ENCODE measurements at regions of chr13 and their contacts with region 1.

Region 1: GRCh38 chr13:26253787-26254582 is at the start of gene CDK8:
- DNase-seq: peak; percentile 89 to 93 (median 91)
- H3K4me3 ChIP-seq: peak within 1 kb of the TSS; percentile 65 to 99 (median 91)
- H3K27ac ChIP-seq: peak within 1 kb of the TSS; percentile 84 to 100 (median 97)
- H3K27me3 ChIP-seq: no peaks in the 10 kb centered on the region
- CTCF ChIP-seq: peak in 28 of 56 donors; percentile 3 to 61 (median 30)
- total RNA-seq, gene CDK8: 10.4 to 23.0 (median 14.9) TPM

Region 2: DNA sequence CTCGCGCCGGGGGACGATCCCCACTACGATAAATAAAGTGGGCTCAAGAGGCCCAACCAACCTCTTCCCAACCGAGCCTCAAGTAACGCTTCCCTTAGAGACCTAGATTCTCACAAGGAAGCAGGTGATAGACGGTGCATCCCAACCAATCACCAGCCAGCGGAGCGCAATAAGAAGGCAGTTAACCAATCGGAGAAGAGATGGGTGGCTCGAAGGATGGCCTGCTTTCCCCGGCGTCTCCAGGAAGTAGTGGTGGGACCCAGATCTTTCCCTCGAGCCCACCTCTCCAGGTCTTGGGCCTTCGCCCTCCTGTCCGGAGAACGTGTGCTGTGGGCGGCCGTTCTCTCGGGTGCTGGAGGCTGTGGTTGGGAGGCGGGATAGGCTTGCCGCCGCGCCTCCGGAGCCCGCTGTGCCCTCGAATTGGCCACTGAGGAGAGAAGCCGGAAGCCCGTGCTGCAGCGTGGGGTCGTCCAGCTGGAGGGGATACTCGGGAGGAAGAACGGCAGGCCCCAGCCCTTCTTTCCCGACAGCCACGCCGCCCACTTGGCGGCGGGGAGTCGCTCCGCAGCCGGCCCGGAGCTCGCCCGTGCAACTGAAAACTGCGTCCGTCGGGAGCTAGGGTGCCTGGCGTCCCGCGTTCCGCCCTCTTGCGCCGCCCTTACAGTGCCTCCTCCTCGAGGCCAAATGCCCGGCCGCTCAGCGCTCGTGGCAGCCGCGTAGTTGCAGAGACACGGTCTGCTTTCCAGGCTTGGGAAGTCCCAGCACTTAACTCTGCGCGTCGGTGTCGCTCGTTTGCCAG is 32.1 kb before region 1 on chr13 and contains the start of gene RNF6:
- intact Hi-C with region 1: loop called (anchors 1 to 2 kb)
- DNase-seq: peak; percentile 84 to 99 (median 95)
- H3K4me3 ChIP-seq: peak within 1 kb of the TSS; percentile 67 to 99 (median 91)
- H3K27ac ChIP-seq: peak within 1 kb of the TSS; percentile 65 to 99 (median 96)
- H3K27me3 ChIP-seq: no peaks in the 10 kb centered on the region
- CTCF ChIP-seq: peak in 45 of 56 donors; percentile 13 to 63 (median 35)
- total RNA-seq, gene RNF6: 25.4 to 76.6 (median 53.5) TPM

Region 3: DNA sequence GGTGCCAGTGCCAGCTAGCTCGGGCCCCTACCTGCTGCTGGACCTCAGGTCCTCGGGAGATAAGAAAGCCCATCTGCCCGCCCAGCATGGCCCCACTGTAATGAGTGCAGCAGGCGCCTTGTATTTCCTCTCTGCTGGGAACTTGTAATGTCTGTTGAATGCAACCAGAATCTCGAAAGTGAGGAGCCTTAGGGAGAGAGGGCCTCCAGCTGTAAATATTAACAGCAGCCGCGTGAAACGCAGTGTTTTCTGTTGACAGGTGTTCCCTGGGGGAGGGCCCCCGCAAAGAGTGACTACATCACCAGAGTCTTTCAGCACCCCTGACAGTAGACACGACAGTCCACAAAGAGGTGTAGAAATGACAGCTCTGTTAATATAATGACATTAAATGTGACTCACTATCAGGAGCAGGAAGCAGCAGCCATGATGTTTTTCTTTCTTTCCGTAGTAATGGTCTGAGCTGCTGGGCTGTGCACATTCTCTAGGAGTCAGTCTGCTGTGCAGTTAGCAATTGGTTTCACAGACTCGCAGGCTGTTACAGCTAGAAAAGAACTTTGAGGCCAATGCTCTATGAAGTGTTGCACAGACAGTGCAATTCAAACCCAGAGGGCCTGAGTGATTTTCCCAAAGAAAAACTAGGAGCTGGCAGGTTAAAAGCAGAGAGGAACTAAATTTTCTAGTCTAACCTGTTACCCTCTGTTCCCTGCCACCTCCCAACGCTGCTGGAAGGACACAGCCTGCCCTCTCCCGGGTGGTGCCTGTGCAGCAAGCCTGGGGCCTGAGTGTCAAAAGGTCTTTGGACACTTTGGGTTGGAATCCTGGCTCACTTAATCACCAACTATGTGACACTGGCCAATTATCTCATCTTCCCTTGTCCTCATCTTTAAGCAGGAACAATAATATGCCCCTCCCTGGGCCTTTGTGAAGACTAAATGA is 244.9 kb after region 1 on chr13:
- intact Hi-C with region 1: loop called in 1 of 2 experiments (anchors 10 kb)
- DNase-seq: peak in 1 of 10 donors; percentile 61
- H3K4me3 ChIP-seq: no peak overlapping the region
- H3K27ac ChIP-seq: peak overlapping the region in 1 of 59 donors; percentile 72
- H3K27me3 ChIP-seq: no peaks in the 10 kb centered on the region
- CTCF ChIP-seq: no peak

Region 4: GRCh38 chr13:26557393-26558023 is 303.5 kb after region 1 on chr13 and contains the start of gene WASF3:
- intact Hi-C with region 1: loop called (anchors 5 to 10 kb)
- DNase-seq: peak; percentile 92 to 98 (median 96)
- H3K4me3 ChIP-seq: peak within 1 kb of the TSS; percentile 66 to 98 (median 82)
- H3K27ac ChIP-seq: peak within 1 kb of the TSS in 45 of 59 donors; percentile 15 to 88 (median 69)
- H3K27me3 ChIP-seq: no peaks in the 10 kb centered on the region
- CTCF ChIP-seq: peak in 12 of 56 donors; percentile 3 to 26 (median 12)
- total RNA-seq, gene WASF3: 84.2 to 234 (median 141) TPM

Measured in dorsolateral prefrontal cortex (tissue), 120 donors.